Mammary epithelial cell (primary cell): ENCODE measurements at regions of chr1 and their contacts with region 1.

Region 1: DNA sequence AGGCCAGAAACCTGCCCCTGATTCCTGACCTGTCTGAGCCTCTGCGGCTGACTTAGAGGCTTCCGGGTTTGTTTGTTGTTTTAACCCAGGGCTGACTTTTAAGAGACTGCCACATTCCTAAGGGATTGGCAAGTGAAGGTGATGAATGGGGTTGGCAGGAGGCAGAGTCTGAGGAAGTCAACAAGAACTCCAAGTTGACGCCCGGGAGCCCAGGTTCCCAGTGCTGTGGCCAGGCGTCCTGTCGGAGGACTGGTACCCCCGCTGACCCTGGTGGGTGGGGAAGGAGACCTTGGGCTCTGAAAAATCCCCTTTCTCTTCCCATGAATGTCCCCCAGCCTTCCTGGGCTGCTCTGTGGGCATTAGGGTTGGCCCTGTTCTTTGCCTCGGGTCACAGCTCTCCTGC is 19.7 kb upstream of the EPS8L3 start:
- DNase-seq: peak; percentile 80
- H3K4me3 ChIP-seq: no peak overlapping the region
- H3K27ac ChIP-seq: peak overlapping the region; percentile 4
- H3K4me1 ChIP-seq: peaks cover 28% of the 10 kb centered on the region
- H3K27me3 ChIP-seq: no peaks in the 10 kb centered on the region
- CTCF ChIP-seq: no peak

Region 2: GRCh38 chr1:109910123-109910962 is 126.9 kb after region 1 on chr1 and contains the start of gene CSF1:
- CTCF ChIA-PET with region 1: no interaction called
- dilution Hi-C with region 1: no loop called
- in situ Hi-C with region 1: loop called in 1 of 2 experiments (anchors 25 kb)
- intact Hi-C with region 1: loop called (anchors 2 kb)
- DNase-seq: peak; percentile 64
- H3K4me3 ChIP-seq: peak within 1 kb of the TSS; percentile 58 to 81 (median 67)
- H3K27ac ChIP-seq: peak within 1 kb of the TSS; percentile 29
- H3K4me1 ChIP-seq: peaks cover 21% of the 10 kb centered on the region
- H3K27me3 ChIP-seq: no peaks in the 10 kb centered on the region
- CTCF ChIP-seq: no peak
- total RNA-seq, gene CSF1: 5.6 to 29.5 TPM